Head of caudate nucleus (tissue), 42 donors: ENCODE measurements at regions of chr3 and their contacts with region 1.

Region 1: GRCh38 chr3:132730891-132731580 is 8.8 kb upstream of the NPHP3 start:
- DNase-seq: peak in 13 of 42 donors; percentile 14 to 70 (median 29)

Region 2: GRCh38 chr3:132352541-132353143 is 378.4 kb before region 1 on chr3:
- intact Hi-C with region 1: no loop called
- DNase-seq: peak in 40 of 42 donors; percentile 5 to 89 (median 69)

Region 3: DNA sequence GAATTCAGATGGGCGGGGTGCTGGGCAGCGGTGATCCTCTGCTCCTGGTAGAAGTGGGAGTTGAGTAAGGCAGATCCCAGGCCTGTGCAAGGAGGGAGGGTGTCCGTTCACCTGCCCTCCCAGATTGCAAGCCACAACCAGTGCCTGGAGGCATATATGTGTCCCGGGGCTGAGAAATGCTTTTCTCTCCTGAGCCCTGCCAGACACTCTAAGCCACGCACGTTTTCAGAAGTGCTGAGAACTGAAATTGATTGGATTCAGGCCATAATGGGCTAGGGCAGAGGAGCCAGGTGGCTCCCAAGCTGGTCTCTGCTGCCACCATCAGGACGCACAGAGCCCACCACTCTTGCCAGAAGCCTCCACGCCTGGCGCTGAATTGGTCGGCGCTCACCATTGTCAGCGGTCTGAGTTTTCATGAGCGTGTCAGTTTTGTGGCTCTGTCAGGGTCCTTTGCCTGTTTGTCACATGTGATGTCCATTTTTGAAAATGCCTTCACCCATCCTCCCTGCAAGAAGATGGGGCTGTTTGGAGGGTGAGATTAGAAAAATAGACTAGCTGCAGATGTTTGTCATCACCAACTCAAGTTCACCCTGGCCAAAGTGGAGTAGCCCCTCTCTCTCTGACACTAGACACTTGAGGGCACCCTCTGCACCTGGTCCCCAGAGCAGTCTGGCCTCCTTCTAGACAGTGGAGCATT is 653.4 kb after region 1 on chr3:
- intact Hi-C with region 1: loop called (anchors 5 kb)
- DNase-seq: peak; percentile 48 to 87 (median 73)

Region 4: GRCh38 chr3:133424937-133425869 is 694.2 kb after region 1 on chr3:
- intact Hi-C with region 1: loop called (anchors 5 kb)
- DNase-seq: no peak